ENCODE measurements at regions of chr1 and their contacts with region 1.

Region 1: DNA sequence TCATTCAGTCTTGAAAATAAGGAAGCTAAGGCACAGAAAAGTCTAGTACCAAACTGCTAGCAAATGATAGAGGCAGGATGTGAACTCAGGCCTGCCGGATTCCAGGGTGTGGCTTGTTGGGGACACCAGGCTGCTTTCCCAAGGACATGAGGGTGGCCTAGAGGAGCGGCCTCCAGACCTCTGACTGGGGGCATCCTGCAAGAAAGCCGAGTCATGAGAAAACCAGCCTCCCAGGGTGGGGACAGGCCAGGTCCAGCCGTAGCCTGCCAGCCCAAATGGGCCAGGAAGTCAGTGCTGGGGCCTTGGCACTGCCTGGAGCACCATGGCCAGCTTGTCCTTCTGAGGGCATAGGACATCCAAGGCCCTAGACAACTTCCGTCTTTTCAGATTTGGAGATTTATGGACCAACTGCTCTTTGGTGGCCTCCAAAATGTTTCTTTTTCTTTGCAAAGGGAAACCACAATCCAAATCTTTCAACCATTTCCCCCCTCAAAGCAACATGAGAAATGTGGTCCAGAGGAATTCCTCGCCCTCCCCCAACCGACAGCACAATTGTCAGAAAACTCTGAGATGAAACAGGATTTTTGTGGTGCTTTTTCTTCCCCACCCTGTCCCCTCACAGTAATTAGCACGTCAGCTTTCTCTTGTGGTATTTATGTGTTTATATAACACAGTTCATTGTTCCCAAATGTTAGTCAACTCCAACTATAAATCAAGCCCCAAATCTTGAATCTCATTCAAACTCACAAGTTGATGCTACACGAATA is 212.3 kb downstream of the KAZN start:
- DNase-seq: no peak
- ATAC-seq: no peak
- H3K4me3 ChIP-seq: no peak overlapping the region
- H3K27ac ChIP-seq: no peak overlapping the region
- H3K4me1 ChIP-seq: peaks cover 0 to 9% (median 0%) of the 10 kb centered on the region in 9 donors
- H3K27me3 ChIP-seq: peaks cover 0 to 4% (median 0%) of the 10 kb centered on the region in 7 donors
- CTCF ChIP-seq: no peak

Region 2: DNA sequence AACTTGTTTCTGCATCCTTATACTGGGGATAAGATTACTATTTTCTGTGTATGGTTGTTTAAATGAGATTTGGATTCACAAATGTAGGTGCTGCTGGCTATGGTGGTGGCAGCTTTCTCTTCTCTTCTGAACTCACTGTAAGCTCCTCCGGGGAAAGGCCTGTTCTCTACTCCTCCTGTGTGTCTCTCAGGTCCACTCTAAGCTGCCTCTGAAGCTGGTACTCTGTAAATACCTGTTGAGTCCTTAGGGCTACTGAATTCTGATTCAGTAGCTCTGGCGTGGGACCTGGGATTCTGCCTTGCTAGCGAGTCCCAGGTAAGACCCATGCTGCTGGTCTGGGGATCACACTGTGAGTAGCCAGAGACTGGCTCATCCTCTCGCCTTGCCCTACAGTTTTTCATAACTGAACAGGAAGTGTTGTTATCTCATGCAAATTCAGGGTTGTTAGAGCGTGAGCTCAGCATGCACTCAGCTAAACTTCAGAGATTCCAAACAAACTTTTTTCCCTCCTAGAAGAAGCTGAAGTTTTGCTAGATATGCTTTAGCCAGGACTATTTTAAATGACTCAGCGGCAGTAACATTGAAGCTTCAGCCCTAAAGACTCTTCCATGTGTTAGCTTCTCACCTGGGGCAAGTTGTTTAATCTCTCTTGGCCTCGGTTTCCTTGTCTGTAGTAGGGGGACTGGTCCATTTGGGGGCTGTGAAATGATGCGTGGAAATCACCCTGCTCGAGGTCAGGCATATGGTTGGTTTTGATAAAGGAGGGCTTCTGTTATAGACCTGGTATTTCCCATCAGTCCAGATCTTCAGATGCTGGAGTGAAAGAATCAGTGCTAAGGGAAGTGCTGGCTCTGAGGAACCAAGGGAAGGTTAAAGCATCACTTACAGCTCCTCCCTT is 71.2 kb after region 1 on chr1:
- intact Hi-C with region 1: loop called in 1 of 10 experiments (anchors 2 kb)
- DNase-seq: no peak
- ATAC-seq: no peak
- H3K4me3 ChIP-seq: no peak overlapping the region
- H3K27ac ChIP-seq: no peak overlapping the region
- H3K4me1 ChIP-seq: peaks cover 0 to 3% (median 0%) of the 10 kb centered on the region in 9 donors
- H3K27me3 ChIP-seq: peaks cover 0 to 28% (median 8%) of the 10 kb centered on the region in 7 donors
- CTCF ChIP-seq: no peak

Measured in heart right ventricle (tissue), 16 donors.